ENCODE measurements at regions of chr22 and their contacts with region 1.

Region 1: DNA sequence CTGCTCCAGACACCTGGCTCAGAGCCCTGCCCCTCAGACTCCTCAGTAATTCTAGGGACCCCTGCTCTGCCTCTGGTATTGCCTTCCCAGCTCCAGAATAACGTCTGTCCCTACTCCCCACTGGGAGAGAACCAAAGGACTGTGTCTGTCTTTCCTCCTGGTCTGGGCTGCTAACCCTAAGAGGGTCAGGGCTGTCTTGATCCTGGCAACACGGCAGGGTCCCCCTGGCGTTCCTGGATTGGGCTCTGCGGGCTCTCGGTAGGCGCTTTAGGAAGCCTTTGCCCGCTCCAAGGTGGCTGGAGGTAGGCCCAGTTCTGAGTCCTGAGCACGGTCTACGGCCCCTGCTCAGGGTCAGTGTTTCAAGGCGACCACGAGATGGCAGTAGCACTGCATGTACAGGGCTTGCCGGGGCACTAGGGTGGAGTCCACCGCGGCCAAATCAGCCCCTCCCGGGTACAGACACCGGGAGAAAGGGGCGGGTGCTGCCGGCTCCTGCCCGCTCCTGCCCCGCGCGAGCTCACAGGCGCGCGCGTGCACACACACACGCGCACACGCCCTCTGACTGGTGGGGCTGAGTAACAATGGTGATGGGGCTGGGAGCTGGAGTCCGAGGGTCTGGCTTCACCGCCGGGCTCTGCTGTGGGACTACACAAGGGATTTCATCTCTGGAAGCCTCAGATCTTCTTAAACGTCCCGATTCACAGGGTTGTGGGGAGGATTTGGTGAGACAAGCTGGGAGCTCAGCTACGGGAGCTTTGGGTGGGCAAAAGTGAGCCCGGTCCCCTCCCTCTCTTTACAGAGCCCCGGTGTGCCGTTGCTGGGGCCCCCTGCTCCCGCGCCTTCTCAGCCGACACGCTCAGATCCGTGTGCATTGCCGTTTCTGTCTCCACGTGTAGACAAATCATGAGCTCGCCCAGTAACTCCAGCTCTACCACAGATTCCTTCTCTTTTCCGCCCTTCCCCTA is 30.1 kb upstream of the HMOX1 start:
- DNase-seq: peak; percentile 97
- H3K4me3 ChIP-seq: peak overlapping the region; percentile 12 to 70 (median 46)
- H3K27ac ChIP-seq: peak overlapping the region; percentile 33 to 95 (median 84)
- H3K4me1 ChIP-seq: peaks cover 14 to 60% (median 44%) of the 10 kb centered on the region in 6 donors
- H3K27me3 ChIP-seq: no peaks in the 10 kb centered on the region
- CTCF ChIP-seq: peak; percentile 90 to 99 (median 96)
- POLR2A ChIP-seq: peak in 1 of 3 donors; percentile 31

Region 2: GRCh38 chr22:35386670-35387288 is 36.0 kb after region 1 on chr22:
- intact Hi-C with region 1: no loop called
- DNase-seq: no peak
- H3K4me3 ChIP-seq: peak overlapping the region in 2 of 8 donors; percentile 10 to 32
- H3K27ac ChIP-seq: peak overlapping the region in 1 of 8 donors; percentile 5
- H3K4me1 ChIP-seq: peaks cover 0 to 18% (median 5%) of the 10 kb centered on the region in 6 donors
- H3K27me3 ChIP-seq: no peaks in the 10 kb centered on the region
- CTCF ChIP-seq: no peak
- POLR2A ChIP-seq: peak in 2 of 3 donors; percentile 2 to 12

Region 3: GRCh38 chr22:35399678-35400334 is 49.0 kb after region 1 on chr22 and contains the start of gene MCM5:
- intact Hi-C with region 1: loop called (anchors 10 kb)
- DNase-seq: peak; percentile 98
- H3K4me3 ChIP-seq: peak within 1 kb of the TSS; percentile 83 to 99 (median 94)
- H3K27ac ChIP-seq: peak within 1 kb of the TSS; percentile 65 to 87 (median 82)
- H3K4me1 ChIP-seq: peaks cover 13 to 85% (median 60%) of the 10 kb centered on the region in 6 donors
- H3K27me3 ChIP-seq: no peaks in the 10 kb centered on the region
- CTCF ChIP-seq: peak in 2 of 11 experiments; percentile 7 to 31
- POLR2A ChIP-seq: no peak
- total RNA-seq, gene MCM5: 51.8 to 96.3 (median 64.8) TPM

Region 4: GRCh38 chr22:35458547-35459422 is 108.0 kb after region 1 on chr22:
- intact Hi-C with region 1: no loop called
- DNase-seq: no peak
- H3K4me3 ChIP-seq: no peak overlapping the region
- H3K27ac ChIP-seq: no peak overlapping the region
- H3K4me1 ChIP-seq: no peaks in the 10 kb centered on the region
- H3K27me3 ChIP-seq: no peaks in the 10 kb centered on the region
- CTCF ChIP-seq: no peak
- POLR2A ChIP-seq: no peak

Region 5: GRCh38 chr22:35582861-35583670 is 232.2 kb after region 1 on chr22:
- intact Hi-C with region 1: loop called (anchors 5 kb)
- DNase-seq: peak; percentile 84
- H3K4me3 ChIP-seq: no peak overlapping the region
- H3K27ac ChIP-seq: no peak overlapping the region
- H3K4me1 ChIP-seq: peaks cover 0 to 10% (median 6%) of the 10 kb centered on the region in 6 donors
- H3K27me3 ChIP-seq: no peaks in the 10 kb centered on the region
- CTCF ChIP-seq: peak; percentile 76 to 97 (median 92)
- POLR2A ChIP-seq: no peak

Measured in spleen (tissue), 13 donors.